Activated CD4-positive, alpha-beta T cell treated with anti-CD3 and anti-CD28 coated beads, Interleukin-2, amount 10 ng/mL, durations not matched to agents 24 days and 14 days (primary cell): ENCODE measurements at regions of chr17 and their contacts with region 1.

Region 1: GRCh38 chr17:73192894-73193701 is at the start of gene COG1:
- DNase-seq: peak; percentile 90
- H3K4me3 Mint-ChIP-seq: peak within 1 kb of the TSS; percentile 93
- H3K27ac Mint-ChIP-seq: peak within 1 kb of the TSS; percentile 97
- H3K4me1 Mint-ChIP-seq: peaks cover 18% of the 10 kb centered on the region
- H3K27me3 Mint-ChIP-seq: no peaks in the 10 kb centered on the region
- total RNA-seq, gene COG1: 30.0 and 32.7 TPM in 2 replicates

Region 2: DNA sequence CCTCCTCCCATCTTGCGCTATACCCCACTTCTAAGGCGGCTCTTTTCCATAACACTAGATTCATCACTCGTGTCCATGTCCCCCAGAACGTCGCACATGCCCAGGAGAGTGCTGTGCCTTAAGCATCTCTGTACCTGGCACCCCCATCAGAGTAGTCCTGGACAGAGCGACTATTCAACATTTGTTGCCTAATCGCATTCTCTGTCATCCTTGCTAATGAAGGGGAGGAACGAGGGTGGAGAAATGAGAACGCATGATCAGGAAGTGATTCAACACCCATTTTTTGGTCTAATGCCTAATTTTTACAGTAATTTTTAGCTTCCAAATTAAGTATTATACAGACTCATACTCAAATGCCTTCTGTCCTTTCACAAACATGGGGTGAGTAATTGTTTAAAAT is 153.8 kb before region 1 on chr17:
- intact Hi-C with region 1: no loop called
- DNase-seq: no peak
- H3K4me3 Mint-ChIP-seq: no peak overlapping the region
- H3K27ac Mint-ChIP-seq: no peak overlapping the region
- H3K4me1 Mint-ChIP-seq: no peaks in the 10 kb centered on the region
- H3K27me3 Mint-ChIP-seq: no peaks in the 10 kb centered on the region

Region 3: GRCh38 chr17:73210002-73210678 is 17.0 kb after region 1 on chr17:
- intact Hi-C with region 1: loop called (anchors 2 kb)
- DNase-seq: no peak
- H3K4me3 Mint-ChIP-seq: no peak overlapping the region
- H3K27ac Mint-ChIP-seq: peak overlapping the region; percentile 71
- H3K4me1 Mint-ChIP-seq: peaks cover 21% of the 10 kb centered on the region
- H3K27me3 Mint-ChIP-seq: no peaks in the 10 kb centered on the region

Region 4: DNA sequence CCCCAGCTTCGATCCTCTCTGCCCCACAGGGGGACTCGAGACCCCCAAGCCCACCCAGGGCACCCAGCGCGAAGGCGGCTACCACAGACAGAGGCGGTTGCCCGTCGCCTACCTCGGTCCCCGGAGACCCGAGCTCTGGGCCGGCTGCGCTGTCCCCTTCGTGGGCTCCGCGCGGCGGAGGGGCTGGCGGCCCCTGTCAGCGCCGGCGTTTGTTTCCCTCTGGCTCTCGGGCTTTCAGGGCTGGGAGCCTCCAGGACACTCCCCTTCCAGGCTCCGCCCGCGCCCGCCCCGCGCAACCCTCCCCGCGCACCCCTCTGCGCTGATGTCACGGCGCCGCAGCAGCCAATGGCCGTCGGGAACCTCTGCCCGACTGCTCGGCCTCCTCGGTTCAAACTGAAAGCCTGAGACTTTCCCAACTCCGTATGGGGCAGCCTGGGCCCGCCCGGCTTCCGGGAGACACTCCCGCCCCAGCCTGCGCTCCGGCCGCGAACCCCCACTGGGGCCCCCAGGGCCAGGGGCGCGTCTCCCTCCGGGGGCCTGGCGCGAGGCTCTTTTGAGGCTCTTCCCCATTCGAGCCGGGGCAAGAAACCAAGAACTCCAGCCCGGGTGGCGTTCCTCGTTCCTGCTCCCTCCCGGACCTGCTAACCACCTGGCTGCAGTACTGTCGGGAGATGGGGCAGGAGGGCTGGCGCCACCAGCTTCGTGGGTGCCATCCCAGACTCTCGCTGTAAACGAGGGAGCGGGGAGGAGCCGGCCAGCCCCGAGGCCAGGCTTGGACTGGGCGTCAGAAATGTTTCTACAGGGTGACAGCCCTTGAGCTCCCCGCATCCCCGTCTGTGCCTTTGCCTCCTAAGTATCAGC is 118.9 kb after region 1 on chr17 and contains the start of gene CDC42EP4:
- intact Hi-C with region 1: loop called (anchors 1 kb)
- DNase-seq: peak; percentile 97
- H3K4me3 Mint-ChIP-seq: peak within 1 kb of the TSS; percentile 86
- H3K27ac Mint-ChIP-seq: peak within 1 kb of the TSS; percentile 25
- H3K4me1 Mint-ChIP-seq: peaks cover 5% of the 10 kb centered on the region
- H3K27me3 Mint-ChIP-seq: peaks cover 9% of the 10 kb centered on the region
- total RNA-seq, gene CDC42EP4: 0.86 and 0.95 TPM in 2 replicates